A549 (cell line): ENCODE measurements at regions of chr12 and their contacts with region 1.

Region 1: DNA sequence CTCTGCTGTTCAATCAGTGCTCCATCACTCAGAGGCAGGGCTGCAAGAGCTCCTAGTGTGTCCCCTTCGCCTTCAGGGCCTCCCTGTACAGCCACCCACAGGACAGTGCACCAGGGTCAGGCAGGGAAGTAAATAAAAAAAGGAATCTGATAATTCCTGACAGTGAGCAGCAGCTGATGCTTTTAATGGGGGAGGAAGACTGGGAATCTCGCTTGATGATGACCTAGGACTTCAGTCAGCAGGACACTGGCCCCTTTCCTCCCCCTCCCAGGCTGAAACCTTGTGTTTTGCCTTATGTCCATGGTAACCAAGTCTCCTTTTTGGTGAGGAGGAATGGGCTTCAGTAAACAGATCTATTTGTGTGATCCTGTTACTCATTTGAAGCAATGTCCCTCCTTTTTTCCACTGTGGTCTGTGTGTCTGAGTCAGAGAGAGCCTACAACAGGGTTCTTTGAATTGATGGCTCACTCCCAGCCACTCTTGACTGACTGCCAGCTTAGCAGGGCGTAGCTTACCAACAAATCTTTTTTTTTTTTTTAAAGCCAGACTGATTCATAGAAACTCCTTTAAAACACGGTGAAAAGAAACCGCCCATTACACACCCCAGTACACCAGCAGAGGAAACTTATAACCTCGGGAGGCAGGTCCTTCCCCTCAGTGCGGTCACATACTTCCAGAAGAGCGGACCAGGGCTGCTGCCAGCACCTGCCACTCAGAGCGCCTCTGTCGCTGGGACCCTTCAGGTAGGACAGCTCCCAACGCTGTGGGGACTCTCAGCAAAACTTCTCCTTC is at the start of gene EMP1:
- DNase-seq: peak; percentile 84 to 97
- ATAC-seq: peak; percentile 91
- H3K4me3 ChIP-seq: peak within 1 kb of the TSS; percentile 46
- H3K27ac ChIP-seq: peak within 1 kb of the TSS; percentile 72 to 83
- H3K4me1 ChIP-seq: peaks cover 46% of the 10 kb centered on the region
- CTCF ChIP-seq: no peak
- EP300 ChIP-seq: no peak; a peak in 2 of 5 replicates
- POLR2A ChIP-seq: no peak
- RAD21 ChIP-seq: peak in 1 of 2 experiments; percentile 29; a peak in 1 of 5 replicates
- polyA plus RNA-seq, gene EMP1: 21.2 and 25.5 TPM in 2 replicates

Region 2: GRCh38 chr12:13100882-13101769 is 95.2 kb before region 1 on chr12:
- CTCF ChIA-PET with region 1: interaction called, 15 read pairs
- POLR2A ChIA-PET with region 1: interaction called, 14 read pairs
- DNase-seq: peak; percentile 83 to 95
- ATAC-seq: peak; percentile 75 to 81
- H3K4me3 ChIP-seq: peak overlapping the region; percentile 52
- H3K27ac ChIP-seq: peak overlapping the region; percentile 95
- H3K4me1 ChIP-seq: peaks cover 57% of the 10 kb centered on the region
- CTCF ChIP-seq: no peak
- EP300 ChIP-seq: peak in 1 of 2 experiments; percentile 65; a peak in 1 of 5 replicates
- POLR2A ChIP-seq: peak; percentile 6; the same call in 1 of the 2 replicates
- RAD21 ChIP-seq: peak; percentile 7 to 35; a peak in 2 of 5 replicates